Heart right ventricle (tissue), 16 donors: ENCODE measurements at regions of chr11 and their contacts with region 1.

Region 1: GRCh38 chr11:123137431-123138224 is 57.4 kb downstream of the CLMP start:
- DNase-seq: peak; percentile 79 to 84
- ATAC-seq: peak; percentile 88 to 96 (median 94)
- H3K4me3 ChIP-seq: peak overlapping the region in 6 of 10 donors; percentile 5 to 28 (median 21)
- H3K27ac ChIP-seq: peak overlapping the region; percentile 4 to 83 (median 64)
- H3K4me1 ChIP-seq: peaks cover 0 to 23% (median 12%) of the 10 kb centered on the region in 9 donors
- H3K27me3 ChIP-seq: peaks cover 0 to 8% (median 0%) of the 10 kb centered on the region in 7 donors
- CTCF ChIP-seq: no peak

Region 2: GRCh38 chr11:123062158-123062891 is 75.3 kb before region 1 on chr11:
- intact Hi-C with region 1: loop called in 1 of 10 experiments (anchors 2 kb)
- DNase-seq: peak; percentile 98 to 99
- ATAC-seq: peak; percentile 92 to 96 (median 93)
- H3K4me3 ChIP-seq: peak overlapping the region; percentile 67 to 96 (median 88)
- H3K27ac ChIP-seq: peak overlapping the region; percentile 99 to 100 (median 100)
- H3K4me1 ChIP-seq: peaks cover 14 to 70% (median 54%) of the 10 kb centered on the region in 9 donors
- H3K27me3 ChIP-seq: no peaks in the 10 kb centered on the region
- CTCF ChIP-seq: peak in 1 of 9 donors; percentile 9